ENCODE measurements at regions of chr3 and their contacts with region 1.

Region 1: GRCh38 chr3:134212906-134213665 is 37.6 kb downstream of the RYK start:
- DNase-seq: peak; percentile 73 to 99
- H3K4me3 ChIP-seq: no peak overlapping the region
- H3K27ac ChIP-seq: no peak overlapping the region
- H3K4me1 ChIP-seq: no peaks in the 10 kb centered on the region
- H3K27me3 ChIP-seq: no peaks in the 10 kb centered on the region
- CTCF ChIP-seq: peak; percentile 82 to 99 (median 90)
- EP300 ChIP-seq: no peak
- POLR2A ChIP-seq: no peak
- RAD21 ChIP-seq: peak; percentile 82 to 89

Region 2: GRCh38 chr3:133938770-133939462 is 274.2 kb before region 1 on chr3:
- CTCF ChIA-PET with region 1: interaction called, 34 read pairs
- POLR2A ChIA-PET with region 1: no interaction called
- DNase-seq: peak in 1 of 2 experiments; percentile 36
- H3K4me3 ChIP-seq: no peak overlapping the region
- H3K27ac ChIP-seq: no peak overlapping the region
- H3K4me1 ChIP-seq: peaks cover 0 to 10% (median 3%) of the 10 kb centered on the region in 4 experiments; a peak in 5 of 7 replicates
- H3K27me3 ChIP-seq: no peaks in the 10 kb centered on the region
- CTCF ChIP-seq: peak; percentile 25 to 34 (median 32); a peak in 2 of 4 replicates
- EP300 ChIP-seq: no peak
- POLR2A ChIP-seq: no peak
- RAD21 ChIP-seq: peak; percentile 54 to 69

Region 3: DNA sequence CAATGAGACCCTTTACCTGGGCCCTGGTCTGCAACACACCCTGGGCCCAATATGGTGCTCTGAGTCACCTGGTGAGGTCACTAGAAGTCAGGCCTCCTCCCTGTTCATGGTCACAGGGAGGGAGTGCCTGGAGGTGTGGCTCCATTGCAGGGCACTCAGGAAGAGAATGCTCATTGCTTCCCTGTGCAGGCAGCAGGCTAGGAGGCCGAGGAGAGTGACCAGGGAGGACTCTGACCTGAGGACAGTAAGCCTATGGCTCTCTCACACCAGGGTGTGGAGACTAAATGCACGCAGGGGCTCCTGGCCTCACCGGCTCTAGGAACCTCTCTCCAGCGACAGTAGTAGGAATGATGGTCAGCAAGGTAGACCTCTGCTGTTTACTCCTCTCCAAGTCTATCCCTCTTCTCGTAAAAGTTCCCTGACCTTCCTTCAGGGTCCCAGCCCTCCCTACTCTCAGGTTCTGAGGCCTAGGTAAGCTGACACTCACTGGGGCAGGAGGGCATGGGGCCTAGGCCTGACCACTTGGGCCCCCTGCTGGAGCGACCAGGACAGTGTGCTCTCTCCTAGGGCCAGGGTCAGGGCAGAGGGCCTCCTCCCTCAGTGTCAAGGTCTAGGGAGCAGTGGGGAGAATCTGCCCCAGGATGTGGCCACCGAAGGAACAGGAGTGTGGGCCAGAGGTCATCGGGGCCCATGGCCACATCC is 173.8 kb before region 1 on chr3:
- CTCF ChIA-PET with region 1: no interaction called
- POLR2A ChIA-PET with region 1: no interaction called
- DNase-seq: peak in 1 of 2 experiments; percentile 57
- H3K4me3 ChIP-seq: no peak overlapping the region
- H3K27ac ChIP-seq: no peak overlapping the region
- H3K4me1 ChIP-seq: no peaks in the 10 kb centered on the region; a peak in 1 of 7 replicates
- H3K27me3 ChIP-seq: no peaks in the 10 kb centered on the region
- CTCF ChIP-seq: peak; percentile 75 to 81 (median 78)
- EP300 ChIP-seq: no peak
- POLR2A ChIP-seq: no peak
- RAD21 ChIP-seq: peak; percentile 75 to 83

Region 4: GRCh38 chr3:134190250-134190649 is 22.8 kb before region 1 on chr3:
- CTCF ChIA-PET with region 1: interaction called, 17 read pairs
- POLR2A ChIA-PET with region 1: no interaction called
- DNase-seq: no peak
- H3K4me3 ChIP-seq: no peak overlapping the region
- H3K27ac ChIP-seq: no peak overlapping the region
- H3K4me1 ChIP-seq: no peaks in the 10 kb centered on the region; a peak in 2 of 7 replicates
- H3K27me3 ChIP-seq: no peaks in the 10 kb centered on the region
- CTCF ChIP-seq: no peak
- EP300 ChIP-seq: no peak
- POLR2A ChIP-seq: no peak
- RAD21 ChIP-seq: no peak

Region 5: GRCh38 chr3:134242649-134243617 is 29.8 kb after region 1 on chr3:
- CTCF ChIA-PET with region 1: interaction called, 21 read pairs
- POLR2A ChIA-PET with region 1: interaction called, 4 read pairs
- DNase-seq: no peak
- H3K4me3 ChIP-seq: no peak overlapping the region
- H3K27ac ChIP-seq: no peak overlapping the region
- H3K4me1 ChIP-seq: peaks cover 3 to 23% (median 17%) of the 10 kb centered on the region in 4 experiments; a peak in 6 of 7 replicates
- H3K27me3 ChIP-seq: no peaks in the 10 kb centered on the region
- CTCF ChIP-seq: no peak
- EP300 ChIP-seq: no peak
- POLR2A ChIP-seq: no peak
- RAD21 ChIP-seq: no peak

Region 6: DNA sequence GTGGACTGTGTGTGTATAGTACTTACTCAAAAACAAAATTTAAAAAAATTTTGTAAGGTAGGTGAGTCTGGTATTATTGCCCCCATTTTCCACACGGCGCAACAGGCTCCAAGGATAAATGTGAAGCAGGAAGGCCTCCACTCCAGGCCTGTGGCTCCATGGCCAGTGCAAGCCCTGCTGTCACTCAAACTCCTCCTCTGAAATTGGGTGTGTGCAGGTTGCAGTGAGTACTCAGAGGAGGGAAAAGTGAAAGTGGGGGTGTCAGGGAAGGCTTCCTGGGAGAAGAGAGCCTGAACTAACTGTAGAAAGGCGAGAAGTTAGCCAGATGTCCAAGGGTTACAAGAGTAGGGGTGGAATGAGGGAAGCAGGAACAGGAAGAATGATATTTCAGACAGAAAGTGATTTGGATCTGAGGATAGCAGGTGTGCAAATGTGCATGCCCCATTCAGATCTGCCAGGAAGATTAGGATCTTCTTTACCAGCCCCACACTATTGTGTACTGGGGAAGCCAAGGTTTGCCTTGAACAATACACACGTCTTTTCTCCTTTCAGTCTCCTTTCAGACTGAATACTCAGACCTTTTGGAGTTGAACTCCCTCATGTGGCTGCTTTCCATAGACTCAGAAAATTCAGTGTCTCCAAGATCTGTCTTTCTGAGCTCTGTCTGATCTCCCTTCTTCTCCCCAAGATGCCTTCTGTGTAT is 86.2 kb after region 1 on chr3:
- CTCF ChIA-PET with region 1: interaction called, 84 read pairs
- POLR2A ChIA-PET with region 1: no interaction called
- DNase-seq: no peak
- H3K4me3 ChIP-seq: no peak overlapping the region
- H3K27ac ChIP-seq: no peak overlapping the region
- H3K4me1 ChIP-seq: 0 out of 7 replicates have a peak, but pooled peaks cover 0 to 2% (median 0%) of the 10 kb centered on the region in 4 experiments
- H3K27me3 ChIP-seq: no peaks in the 10 kb centered on the region
- CTCF ChIP-seq: peak in 2 of 3 experiments; percentile 32 to 43; a peak in 3 of 4 replicates
- EP300 ChIP-seq: no peak
- POLR2A ChIP-seq: no peak
- RAD21 ChIP-seq: peak; percentile 52 to 73

Region 7: DNA sequence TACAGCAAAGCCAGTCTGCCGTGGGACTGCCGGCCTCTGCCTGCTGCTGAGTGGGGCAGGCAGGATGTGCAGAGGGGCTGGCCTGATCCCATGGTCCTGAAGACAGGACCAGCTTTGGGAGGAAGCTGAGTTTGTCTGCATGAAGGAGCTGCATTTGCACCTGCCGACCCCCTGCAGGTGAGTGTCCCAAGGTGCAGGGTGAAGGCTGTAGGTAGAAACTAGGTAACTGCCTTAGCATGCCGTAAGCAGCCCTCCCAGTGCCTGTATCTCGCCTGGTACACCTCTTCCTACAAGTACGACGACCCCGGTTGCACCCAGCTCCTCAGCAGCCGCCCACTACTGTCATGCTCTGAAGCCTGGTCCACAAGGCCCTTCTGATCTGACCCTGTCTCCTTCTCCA is 126.2 kb after region 1 on chr3:
- CTCF ChIA-PET with region 1: no interaction called
- POLR2A ChIA-PET with region 1: no interaction called
- DNase-seq: no peak
- H3K4me3 ChIP-seq: no peak overlapping the region
- H3K27ac ChIP-seq: no peak overlapping the region
- H3K4me1 ChIP-seq: peaks cover 0 to 10% (median 0%) of the 10 kb centered on the region in 4 experiments; a peak in 4 of 7 replicates
- H3K27me3 ChIP-seq: no peaks in the 10 kb centered on the region; a peak in 1 of 7 replicates
- CTCF ChIP-seq: peak in 2 of 3 experiments; percentile 32 to 34; a peak in 2 of 4 replicates
- EP300 ChIP-seq: no peak
- POLR2A ChIP-seq: no peak
- RAD21 ChIP-seq: no peak

Region 8: DNA sequence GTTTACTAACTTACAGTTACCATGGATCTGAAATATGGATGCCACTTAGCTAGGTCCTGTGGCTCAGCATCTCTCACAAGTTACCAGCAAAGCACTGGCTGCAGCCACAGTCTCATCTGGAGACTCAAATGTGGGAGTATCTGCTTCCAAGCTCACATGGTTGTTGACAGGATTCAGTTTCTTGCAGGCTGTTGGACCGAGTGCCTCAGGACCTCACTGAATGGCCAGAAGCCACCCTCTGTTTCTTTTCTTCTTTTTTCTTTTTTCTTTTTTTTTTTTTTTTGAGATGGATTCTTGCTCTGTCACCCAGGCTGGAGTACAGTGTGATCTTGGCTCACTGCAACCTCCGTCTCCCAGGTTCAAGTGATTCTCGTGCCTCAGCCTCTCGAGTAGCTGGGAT is 181.3 kb after region 1 on chr3:
- CTCF ChIA-PET with region 1: no interaction called
- POLR2A ChIA-PET with region 1: no interaction called
- DNase-seq: no peak
- H3K4me3 ChIP-seq: no peak overlapping the region
- H3K27ac ChIP-seq: no peak overlapping the region
- H3K4me1 ChIP-seq: peaks cover 0 to 3% (median 0%) of the 10 kb centered on the region in 4 experiments; a peak in 1 of 7 replicates
- H3K27me3 ChIP-seq: no peaks in the 10 kb centered on the region; a peak in 1 of 7 replicates
- CTCF ChIP-seq: no peak
- EP300 ChIP-seq: no peak
- POLR2A ChIP-seq: no peak
- RAD21 ChIP-seq: no peak

Region 9: DNA sequence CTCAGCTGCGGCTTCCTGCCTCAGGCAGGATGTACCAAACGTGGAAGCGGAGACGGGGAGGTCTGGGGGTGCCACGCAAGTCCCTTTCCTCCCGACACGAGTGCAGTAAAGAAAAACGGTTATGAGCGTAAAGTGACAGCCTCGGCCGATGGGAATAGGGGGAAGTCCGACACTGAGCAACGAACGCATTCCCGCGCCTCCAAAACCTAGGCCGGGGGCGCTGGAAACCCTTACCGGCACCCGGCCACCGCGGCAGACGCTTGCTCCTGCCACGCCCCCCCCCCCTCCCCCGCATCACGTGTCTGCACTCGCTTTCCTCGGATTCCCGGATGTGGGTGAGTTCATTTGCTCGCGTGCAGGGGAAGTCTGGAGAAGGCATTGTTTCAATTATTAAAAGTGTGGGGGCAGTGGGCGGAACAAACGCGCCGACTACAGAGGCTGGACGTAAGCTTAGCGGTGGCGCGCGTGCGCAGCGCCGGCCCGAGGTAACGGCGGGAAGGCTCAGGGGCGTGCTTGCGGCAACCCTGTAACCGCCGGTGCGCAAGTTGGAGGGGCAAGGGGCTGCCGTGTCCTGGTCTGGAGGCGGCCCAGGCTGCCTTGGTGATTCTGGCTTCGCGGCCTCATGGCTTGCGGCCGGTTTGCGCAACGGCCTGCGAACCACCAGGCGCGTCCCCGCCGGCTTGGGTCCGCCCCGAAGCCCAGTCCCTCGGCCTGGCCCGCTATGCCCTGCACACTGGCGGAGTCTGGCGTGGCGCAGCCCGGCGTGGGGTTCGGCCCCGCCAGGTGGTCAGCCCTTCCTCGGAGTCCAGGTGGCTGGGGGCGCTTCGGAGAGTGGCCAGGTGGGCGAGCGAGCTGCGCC is 272.9 kb after region 1 on chr3 and contains the starts of genes ANAPC13 and CEP63:
- CTCF ChIA-PET with region 1: interaction called, 13 read pairs
- POLR2A ChIA-PET with region 1: no interaction called
- DNase-seq: peak; percentile 86 to 95
- H3K4me3 ChIP-seq: peak within 1 kb of the TSS; percentile 68 to 96 (median 80)
- H3K27ac ChIP-seq: peak within 1 kb of the TSS; percentile 83
- H3K4me1 ChIP-seq: peaks cover 0 to 10% (median 7%) of the 10 kb centered on the region in 4 experiments; a peak in 6 of 7 replicates
- H3K27me3 ChIP-seq: no peaks in the 10 kb centered on the region
- CTCF ChIP-seq: no peak
- EP300 ChIP-seq: peak in 1 of 2 experiments; percentile 81; a peak in 2 of 3 replicates
- POLR2A ChIP-seq: peak; percentile 72 to 85
- RAD21 ChIP-seq: no peak
- total RNA-seq, gene ANAPC13: 31.0 and 34.0 TPM in 2 replicates
- total RNA-seq, gene CEP63: 15.5 and 18.2 TPM in 2 replicates

Region 10: GRCh38 chr3:134542287-134542958 is 329.3 kb after region 1 on chr3:
- CTCF ChIA-PET with region 1: no interaction called
- POLR2A ChIA-PET with region 1: no interaction called
- DNase-seq: no peak
- H3K4me3 ChIP-seq: no peak overlapping the region
- H3K27ac ChIP-seq: no peak overlapping the region
- H3K4me1 ChIP-seq: no peaks in the 10 kb centered on the region
- H3K27me3 ChIP-seq: no peaks in the 10 kb centered on the region
- CTCF ChIP-seq: no peak
- EP300 ChIP-seq: no peak
- POLR2A ChIP-seq: no peak
- RAD21 ChIP-seq: no peak